ENCODE measurements at regions of chr2 and their contacts with region 1.

Region 1: DNA sequence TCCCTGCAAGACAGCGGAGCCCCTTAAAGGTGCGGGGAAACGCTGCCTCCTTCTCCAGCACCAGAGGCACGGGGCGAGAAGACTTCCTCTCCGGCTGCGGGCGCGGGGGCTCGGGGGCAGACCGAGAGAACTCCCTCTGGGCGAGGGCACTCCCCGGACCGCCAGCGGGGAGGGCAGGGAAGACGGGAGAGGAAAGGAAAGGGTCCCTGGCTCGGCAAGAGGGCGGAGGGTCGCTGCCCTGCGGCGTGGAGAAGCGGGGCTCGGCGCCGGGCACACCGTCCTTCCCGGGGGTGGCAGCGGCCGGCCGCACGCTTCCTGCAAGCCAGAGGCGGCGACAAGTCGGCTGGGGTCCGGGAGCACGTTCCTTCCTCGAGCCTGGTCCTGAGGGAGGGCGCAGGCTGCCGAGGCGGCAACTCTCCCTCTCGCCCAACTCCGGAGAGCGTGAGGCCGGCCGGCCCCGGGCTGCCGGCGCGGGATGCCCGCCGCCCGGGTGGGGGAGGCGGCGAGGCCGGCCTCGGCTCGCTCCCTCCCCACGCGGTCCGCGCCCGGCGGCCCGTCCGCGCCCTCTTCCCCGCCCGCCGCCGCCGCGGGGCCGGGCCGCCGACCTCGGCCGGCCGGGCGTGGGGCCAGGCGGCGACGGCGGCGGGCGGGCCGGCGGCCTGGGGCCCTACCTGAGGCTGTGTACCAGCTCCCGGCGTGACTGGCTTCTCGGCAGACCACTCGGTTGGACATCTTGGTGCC is 1.1 kb downstream of the MEMO1 start:
- DNase-seq: peak; percentile 41
- H3K4me3 ChIP-seq: peak overlapping the region; percentile 62
- H3K27ac ChIP-seq: peak overlapping the region; percentile 85
- H3K4me1 ChIP-seq: peaks cover 4% of the 10 kb centered on the region
- H3K27me3 ChIP-seq: no peaks in the 10 kb centered on the region
- CTCF ChIP-seq: no peak

Region 2: DNA sequence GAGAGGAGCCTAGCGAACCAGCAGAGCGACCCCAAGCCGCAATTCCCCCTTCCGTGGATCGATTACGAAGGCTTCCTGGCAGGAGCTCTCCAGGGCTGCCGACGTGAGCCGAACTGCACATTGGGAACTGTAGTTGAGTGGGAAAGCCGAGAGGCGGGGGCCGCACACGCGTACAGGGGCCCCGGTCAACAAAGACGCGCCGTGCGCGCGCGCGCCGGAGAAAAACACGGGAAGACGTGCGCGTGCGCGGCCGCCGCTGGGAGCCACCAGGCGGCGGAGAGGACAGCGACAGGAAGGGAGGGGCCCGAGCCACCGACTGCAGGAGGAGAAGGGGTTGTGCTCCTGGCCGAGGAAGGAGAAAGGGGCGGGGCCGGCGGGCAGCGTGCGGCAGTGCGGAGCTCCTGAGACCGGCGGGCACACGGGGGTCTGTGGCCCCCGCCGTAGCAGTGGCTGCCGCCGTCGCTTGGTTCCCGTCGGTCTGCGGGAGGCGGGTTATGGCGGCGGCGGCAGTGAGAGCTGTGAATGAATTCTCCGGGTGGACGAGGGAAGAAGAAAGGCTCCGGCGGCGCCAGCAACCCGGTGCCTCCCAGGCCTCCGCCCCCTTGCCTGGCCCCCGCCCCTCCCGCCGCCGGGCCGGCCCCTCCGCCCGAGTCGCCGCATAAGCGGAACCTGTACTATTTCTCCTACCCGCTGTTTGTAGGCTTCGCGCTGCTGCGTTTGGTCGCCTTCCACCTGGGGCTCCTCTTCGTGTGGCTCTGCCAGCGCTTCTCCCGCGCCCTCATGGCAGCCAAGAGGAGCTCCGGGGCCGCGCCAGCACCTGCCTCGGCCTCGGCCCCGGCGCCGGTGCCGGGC is 53.9 kb after region 1 on chr2 and contains the start of gene SPAST:
- intact Hi-C with region 1: loop called (anchors 2 kb)
- DNase-seq: peak; percentile 97
- H3K4me3 ChIP-seq: peak within 1 kb of the TSS; percentile 89
- H3K27ac ChIP-seq: peak within 1 kb of the TSS; percentile 94
- H3K4me1 ChIP-seq: no peaks in the 10 kb centered on the region
- H3K27me3 ChIP-seq: no peaks in the 10 kb centered on the region
- CTCF ChIP-seq: peak; percentile 33
- total RNA-seq, gene SPAST: 15.9 to 18.6 TPM